ENCODE measurements at regions of chr1 and their contacts with region 1.

Region 1: DNA sequence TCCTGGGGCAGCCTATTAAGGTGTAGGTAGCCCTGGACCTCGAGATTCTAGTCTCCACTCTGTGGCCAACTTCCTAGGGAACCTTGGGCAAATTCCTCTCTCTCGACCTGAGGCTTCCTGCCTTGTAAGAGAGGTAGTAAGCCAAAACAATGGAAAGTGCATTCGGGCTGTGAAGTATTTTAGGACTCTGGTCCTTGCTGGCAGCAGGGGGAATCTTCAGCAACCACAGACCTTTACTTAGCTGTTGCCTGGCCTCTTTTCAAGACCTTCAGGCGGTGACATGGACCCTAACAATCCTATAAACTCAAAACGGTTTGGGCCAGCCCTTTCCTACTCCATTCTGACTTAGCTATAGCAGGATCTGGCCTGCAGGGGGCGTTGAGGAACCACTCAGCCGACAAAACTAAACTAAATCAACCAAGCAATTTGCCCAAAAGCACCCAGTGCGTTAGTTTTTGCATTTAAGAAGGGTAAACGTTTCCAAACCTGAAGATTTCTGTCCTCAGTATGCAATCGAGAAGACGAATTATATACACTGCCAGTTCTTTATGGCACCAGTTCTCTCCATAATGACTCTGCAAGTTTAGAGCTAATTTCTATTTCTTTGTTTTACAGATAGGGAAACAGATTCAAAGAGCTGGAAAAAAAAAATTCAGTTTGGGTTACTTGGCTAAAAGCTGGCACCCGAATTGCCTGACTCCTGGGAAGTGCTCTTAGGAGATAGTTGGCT is 10.9 kb upstream of the SESN2 start:
- DNase-seq: peak; percentile 75
- H3K4me3 Mint-ChIP-seq: peak overlapping the region; percentile 92
- H3K27ac Mint-ChIP-seq: peak overlapping the region; percentile 96
- H3K4me1 Mint-ChIP-seq: peaks cover 43% of the 10 kb centered on the region
- H3K27me3 Mint-ChIP-seq: no peaks in the 10 kb centered on the region

Region 2: DNA sequence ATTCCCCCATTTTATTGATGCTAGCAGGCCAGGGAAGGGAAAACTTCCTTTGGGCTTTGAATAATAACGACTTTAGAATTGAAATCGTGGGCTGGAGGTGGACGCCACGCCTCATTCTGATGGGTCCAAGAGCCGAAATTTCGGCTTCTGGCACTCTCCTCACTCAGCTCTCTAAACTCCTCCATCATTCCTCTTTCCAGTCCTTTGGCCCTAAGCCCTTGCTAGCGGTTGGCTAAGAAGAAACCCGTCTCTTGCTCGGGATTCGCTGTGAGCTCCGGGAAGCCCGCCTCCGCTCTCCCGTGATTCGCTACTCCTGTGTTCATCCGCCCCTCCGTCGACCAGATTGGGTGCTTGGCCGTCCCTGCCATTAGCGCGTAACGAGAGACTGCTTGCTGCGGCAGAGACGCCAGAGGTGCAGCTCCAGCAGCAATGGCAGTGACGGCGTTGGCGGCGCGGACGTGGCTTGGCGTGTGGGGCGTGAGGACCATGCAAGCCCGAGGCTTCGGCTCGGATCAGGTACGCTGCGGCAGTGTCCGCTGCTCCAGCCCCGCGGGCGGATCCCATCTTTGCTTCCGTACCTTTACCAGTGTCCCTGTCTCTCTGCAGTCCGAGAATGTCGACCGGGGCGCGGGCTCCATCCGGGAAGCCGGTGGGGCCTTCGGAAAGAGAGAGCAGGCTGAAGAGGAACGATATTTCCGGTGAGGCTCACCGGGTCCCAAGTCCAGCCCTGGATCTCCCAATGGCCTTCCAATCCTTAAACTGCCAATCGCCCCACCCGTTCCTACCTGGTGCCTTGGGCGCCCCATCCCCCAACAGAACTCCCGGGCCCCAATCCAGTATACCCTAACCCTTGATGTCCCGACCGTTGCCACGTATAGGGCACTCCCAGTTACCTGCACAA is 12.4 kb before region 1 on chr1 and contains the start of gene ATP5IF1:
- intact Hi-C with region 1: loop called (anchors 1 kb)
- DNase-seq: peak; percentile 93
- H3K4me3 Mint-ChIP-seq: no peak within 1 kb of the TSS
- H3K27ac Mint-ChIP-seq: no peak within 1 kb of the TSS
- H3K4me1 Mint-ChIP-seq: peaks cover 7% of the 10 kb centered on the region
- H3K27me3 Mint-ChIP-seq: no peaks in the 10 kb centered on the region
- total RNA-seq, gene ATP5IF1: 134 and 137 TPM in 2 replicates

Region 3: GRCh38 chr1:28329395-28330153 is 81.1 kb after region 1 on chr1:
- intact Hi-C with region 1: loop called (anchors 1 kb)
- DNase-seq: no peak
- H3K4me3 Mint-ChIP-seq: peak overlapping the region; percentile 93
- H3K27ac Mint-ChIP-seq: peak overlapping the region; percentile 97
- H3K4me1 Mint-ChIP-seq: peaks cover 28% of the 10 kb centered on the region
- H3K27me3 Mint-ChIP-seq: no peaks in the 10 kb centered on the region

Region 4: GRCh38 chr1:28437934-28438699 is 189.7 kb after region 1 on chr1:
- intact Hi-C with region 1: loop called (anchors 5 kb)
- DNase-seq: no peak
- H3K4me3 Mint-ChIP-seq: peak overlapping the region; percentile 67
- H3K27ac Mint-ChIP-seq: peak overlapping the region; percentile 74
- H3K4me1 Mint-ChIP-seq: peaks cover 27% of the 10 kb centered on the region
- H3K27me3 Mint-ChIP-seq: no peaks in the 10 kb centered on the region

Region 5: DNA sequence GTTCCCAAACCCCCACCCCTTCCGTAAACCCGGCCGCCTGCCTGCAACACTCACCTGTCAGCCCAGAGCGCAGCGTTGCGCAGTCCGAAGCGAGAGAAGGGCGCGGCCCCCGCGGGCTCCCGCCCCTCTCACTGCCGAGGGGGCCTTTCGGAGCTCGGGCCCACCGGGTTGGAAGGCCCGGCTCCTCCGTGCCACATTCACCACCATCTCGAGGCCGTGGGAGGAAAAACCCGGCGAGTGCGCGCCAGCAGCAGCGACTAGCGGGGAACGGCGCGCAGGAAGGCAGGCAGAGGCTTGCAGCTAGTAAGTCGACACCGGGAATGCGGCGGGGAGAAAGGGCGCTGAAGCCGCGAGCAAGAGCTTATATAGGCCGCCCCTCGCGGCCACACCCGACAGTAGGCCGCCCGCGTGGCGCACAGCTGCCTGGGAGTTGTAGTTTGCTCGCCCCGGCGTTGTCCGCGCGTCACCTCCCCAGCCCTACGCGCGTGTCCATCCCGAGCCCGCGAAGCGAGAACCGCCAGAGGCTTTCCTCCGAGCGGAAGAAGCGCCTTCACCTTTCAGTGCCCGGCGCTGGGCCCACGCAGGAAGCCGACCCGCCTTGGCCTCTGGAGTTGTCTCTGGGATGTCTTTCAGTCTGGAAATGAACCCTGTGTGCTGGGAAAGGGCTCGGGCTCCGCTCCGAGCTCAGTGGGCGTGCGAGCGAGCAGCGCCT is 333.2 kb after region 1 on chr1:
- intact Hi-C with region 1: loop called (anchors 5 kb)
- DNase-seq: peak; percentile 95
- H3K4me3 Mint-ChIP-seq: peak overlapping the region; percentile 96
- H3K27ac Mint-ChIP-seq: peak overlapping the region; percentile 94
- H3K4me1 Mint-ChIP-seq: peaks cover 21% of the 10 kb centered on the region
- H3K27me3 Mint-ChIP-seq: no peaks in the 10 kb centered on the region

Measured in activated T-helper 2 cell treated with anti-CD3 and anti-CD28 coated beads, Interferon-gamma antibody, Interleukin-2, Interleukin-4, amounts not matched to agents 10 μg/mL and 5 μg/mL and 100 μg/mL, durations not matched to agents 14 hours and 24 hours and 36 hours (primary cell).